ENCODE measurements at regions of chr7 and their contacts with region 1.

Region 1: DNA sequence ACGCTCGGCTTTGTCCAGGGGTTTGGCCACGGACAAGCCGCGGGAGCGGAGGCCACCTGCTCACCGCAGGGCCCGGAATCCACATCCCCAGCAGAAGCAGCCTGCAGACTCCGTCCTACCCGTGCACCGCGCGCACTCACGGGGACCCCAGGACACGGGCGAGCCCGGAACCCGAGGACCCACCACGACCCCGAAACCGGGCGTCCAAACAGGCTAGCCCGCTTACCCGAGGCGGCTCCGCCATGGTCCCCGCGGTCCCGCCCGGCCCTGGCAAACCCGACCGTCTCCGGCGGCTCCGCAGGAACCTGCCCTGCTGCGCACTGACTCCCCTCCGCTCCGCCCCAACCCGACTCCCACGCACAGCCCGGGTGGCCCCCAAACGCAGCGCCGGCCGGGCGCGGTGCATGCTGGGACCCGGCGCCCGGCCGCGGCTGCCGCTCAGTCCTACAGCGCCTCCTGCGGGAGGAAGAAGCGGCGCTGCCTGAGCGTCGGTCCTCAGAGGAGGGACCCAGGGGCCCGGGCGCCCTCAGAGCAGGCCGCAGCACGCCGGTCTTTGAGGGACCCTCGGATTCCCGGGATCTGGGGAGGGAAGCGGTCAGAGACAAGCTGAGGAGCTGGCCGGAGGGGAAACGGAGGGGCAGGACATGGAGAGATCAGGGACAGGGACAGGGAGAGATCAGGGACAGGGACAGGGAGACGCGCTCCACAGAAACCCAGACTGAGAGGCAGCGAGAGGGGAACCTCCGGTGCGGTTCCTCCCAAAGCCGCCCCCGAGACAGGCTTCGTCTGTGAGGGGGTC is at the start of gene ZNF786:
- DNase-seq: peak; percentile 58 to 91 (median 78)
- H3K4me3 ChIP-seq: peak within 1 kb of the TSS; percentile 43 to 100 (median 95)
- H3K27ac ChIP-seq: peak within 1 kb of the TSS; percentile 79 to 100 (median 97)
- H3K27me3 ChIP-seq: no peaks in the 10 kb centered on the region
- CTCF ChIP-seq: peak; percentile 71 to 99 (median 92)
- total RNA-seq, gene ZNF786: 7.0 to 22.7 (median 15.0) TPM

Region 2: DNA sequence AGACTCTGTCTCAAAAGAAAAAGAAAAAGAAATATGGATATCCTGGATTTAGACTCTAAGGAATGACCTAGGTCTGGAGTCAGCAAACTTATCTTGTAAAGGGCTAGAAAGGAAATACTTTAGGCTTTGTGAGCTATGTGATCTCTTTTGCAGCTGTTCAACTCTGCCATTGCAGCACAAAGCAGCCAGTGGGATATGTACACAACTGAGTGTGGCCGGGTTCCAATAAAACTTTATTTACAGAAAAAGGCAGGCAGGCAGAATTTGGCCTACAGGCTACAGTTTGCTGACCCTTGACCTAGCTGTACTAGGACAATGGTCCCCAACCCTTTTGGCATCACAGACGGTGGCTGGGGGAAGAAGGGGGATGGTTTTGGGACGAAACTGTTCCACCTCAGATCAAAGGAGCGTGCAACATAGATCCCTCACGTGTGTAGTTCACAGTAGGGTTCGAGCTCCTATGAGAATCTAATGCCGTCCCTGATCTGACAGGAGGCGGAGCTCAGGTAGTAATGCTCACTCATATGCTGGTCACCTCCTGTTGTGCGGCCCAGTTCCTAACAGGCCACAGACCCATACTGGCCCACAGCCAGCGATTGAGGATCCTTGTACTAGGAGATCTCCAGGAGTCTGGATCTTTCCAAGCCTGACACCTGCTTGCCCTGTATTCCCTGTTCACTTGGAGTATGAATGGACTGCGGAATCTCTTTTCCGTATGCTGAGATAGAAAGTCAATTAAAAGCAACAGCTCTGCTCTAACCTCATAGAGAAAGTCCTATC is 328.9 kb before region 1 on chr7:
- intact Hi-C with region 1: no loop called
- DNase-seq: peak in 1 of 10 donors; percentile 61
- H3K4me3 ChIP-seq: no peak overlapping the region
- H3K27ac ChIP-seq: no peak overlapping the region
- H3K27me3 ChIP-seq: no peaks in the 10 kb centered on the region
- CTCF ChIP-seq: no peak

Region 3: DNA sequence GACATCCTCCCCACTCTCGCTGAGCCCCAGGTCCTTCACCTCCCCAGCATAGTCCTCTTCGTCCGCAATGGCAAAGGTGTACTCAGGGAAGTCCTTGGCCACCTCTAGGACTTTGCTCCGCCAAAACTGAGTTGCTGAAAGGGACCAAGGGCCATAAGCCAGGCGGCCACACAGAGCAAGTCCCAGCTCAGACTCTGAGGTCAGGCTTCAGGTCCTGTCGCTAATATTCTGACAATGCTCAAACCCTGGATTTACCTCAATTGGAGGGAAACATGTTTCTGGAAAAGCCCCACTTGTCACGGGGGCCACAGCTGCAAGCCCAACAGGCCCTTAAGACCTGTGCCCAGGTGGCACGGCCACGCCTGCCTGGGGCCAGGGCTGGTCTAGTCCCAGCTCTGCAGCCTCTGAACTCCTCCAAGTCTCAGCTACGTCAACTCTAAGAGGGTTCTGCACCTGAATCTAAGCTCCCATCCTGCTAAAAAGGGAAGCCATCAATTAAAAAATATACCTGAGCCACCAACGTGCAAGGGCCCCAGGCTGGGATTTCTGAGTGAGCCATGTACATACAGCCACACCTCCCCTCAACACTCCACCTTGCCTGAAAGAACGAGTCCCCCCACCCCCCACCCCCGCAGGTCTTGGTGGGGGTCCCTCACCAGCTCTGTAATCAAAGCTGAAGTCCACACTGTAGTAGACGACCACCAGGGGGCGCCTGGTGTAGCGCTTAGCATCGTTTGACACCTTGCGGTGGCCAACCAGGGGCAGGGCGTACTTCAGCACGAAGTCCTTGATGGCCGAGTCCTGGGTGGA is 85.2 kb before region 1 on chr7:
- intact Hi-C with region 1: loop called (anchors 2 to 5 kb)
- DNase-seq: peak; percentile 55 to 82 (median 76)
- H3K4me3 ChIP-seq: peak overlapping the region in 2 of 59 donors; percentile 4 to 32
- H3K27ac ChIP-seq: peak overlapping the region in 4 of 59 donors; percentile 6 to 60 (median 25)
- H3K27me3 ChIP-seq: no peaks in the 10 kb centered on the region
- CTCF ChIP-seq: peak; percentile 45 to 93 (median 82)

Region 4: DNA sequence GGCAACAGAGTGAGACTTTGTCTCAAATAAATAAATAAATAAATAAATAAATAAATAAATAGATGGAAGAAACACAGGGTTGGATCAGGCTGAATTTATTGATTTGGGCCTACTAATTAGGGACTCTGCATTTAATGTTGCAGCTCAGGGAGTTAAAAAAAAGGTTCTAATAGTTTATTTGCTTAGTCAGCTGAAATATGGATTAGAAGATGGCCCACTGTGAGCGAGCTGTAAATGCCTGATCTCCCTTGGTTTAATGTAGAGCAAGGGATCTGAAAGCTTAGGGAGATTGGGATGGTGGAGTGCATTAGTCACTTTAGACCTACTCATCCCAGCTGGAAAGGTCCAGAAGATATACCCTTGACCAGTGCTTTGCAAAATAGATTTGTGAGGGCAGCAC is 37.2 kb before region 1 on chr7:
- intact Hi-C with region 1: no loop called
- DNase-seq: no peak
- H3K4me3 ChIP-seq: no peak overlapping the region
- H3K27ac ChIP-seq: no peak overlapping the region
- H3K27me3 ChIP-seq: no peaks in the 10 kb centered on the region
- CTCF ChIP-seq: no peak

Region 5: DNA sequence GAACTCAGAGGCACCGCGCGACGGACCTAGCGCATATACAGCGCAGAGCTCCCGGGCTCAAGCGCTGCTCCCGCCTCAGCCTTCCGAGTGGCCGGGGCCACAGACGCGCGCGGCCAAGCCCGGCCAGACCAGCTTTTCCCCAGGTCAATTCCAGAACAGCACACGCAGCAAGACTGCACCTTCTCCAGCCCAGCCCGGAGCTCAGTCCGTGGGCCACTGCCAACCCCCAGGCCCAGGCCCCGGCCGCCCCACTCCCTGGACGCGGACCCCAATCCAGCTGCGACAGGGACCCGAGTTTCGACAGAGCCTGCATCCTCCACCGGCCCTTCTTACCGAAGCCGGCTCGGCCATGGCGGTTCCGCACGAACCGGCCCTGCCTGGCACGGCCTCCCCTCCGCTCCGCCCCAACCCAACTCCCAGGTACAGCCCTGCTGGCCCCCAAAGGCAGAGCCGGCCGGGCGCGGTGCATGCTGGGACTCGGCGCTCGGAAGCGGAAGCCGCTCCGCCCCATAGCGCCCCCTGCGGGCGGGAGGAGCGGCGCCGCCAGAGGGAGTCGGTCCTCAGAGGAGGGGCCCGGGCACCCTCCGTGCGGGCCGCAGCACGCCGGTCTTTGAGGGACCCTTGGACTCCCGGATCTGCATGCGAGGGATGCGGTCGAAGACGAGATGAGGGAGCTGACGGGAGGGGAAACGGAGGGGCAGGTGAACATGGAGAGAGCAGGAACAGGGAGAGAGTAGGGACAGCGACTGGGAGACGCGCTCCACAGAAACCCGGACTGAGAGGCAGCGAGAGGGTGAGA is 35.5 kb after region 1 on chr7 and contains the start of gene ZNF425:
- intact Hi-C with region 1: loop called (anchors 1 to 2 kb)
- DNase-seq: peak; percentile 64 to 94 (median 83)
- H3K4me3 ChIP-seq: peak within 1 kb of the TSS; percentile 69 to 100 (median 94)
- H3K27ac ChIP-seq: peak within 1 kb of the TSS; percentile 53 to 99 (median 96)
- H3K27me3 ChIP-seq: no peaks in the 10 kb centered on the region
- CTCF ChIP-seq: peak; percentile 73 to 99 (median 94)
- total RNA-seq, gene ZNF425: 3.9 to 11.4 (median 6.6) TPM

Region 6: DNA sequence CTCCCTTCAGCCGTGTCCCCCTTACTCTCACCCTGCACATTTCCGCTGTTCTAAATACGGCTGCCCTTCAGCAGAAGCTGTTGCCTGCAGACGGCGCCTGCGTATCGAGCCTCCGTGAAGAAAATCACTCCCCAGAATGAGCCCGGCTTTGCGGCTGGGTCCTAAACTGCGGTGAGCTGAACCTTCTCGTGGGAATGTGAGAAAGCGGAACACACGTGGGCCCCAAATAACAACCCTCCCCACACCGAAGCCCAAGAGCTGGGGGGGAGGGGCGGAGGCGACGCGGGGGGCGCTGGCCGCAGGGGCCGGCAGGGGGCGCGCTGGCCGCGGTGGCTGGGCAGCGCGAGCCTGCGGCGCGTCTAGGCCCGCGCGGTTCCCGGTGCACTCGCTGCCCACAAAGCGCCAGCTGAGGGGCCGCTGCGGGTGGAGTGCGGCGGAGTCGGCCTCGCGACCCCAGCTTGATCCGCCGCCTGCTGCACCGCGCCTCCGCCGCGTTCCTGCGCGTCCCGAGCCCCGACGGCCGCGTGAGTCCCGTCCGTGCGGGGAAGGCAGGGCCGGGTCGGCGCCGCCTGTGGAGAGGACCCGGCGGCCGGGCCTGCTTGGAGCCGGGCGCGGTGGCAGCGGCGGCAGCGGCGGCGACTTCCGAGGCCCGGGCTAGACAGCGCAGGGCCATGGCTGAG is 56.6 kb after region 1 on chr7 and contains the start of gene ZNF398:
- intact Hi-C with region 1: no loop called
- DNase-seq: peak; percentile 51 to 82 (median 71)
- H3K4me3 ChIP-seq: peak within 1 kb of the TSS; percentile 64 to 97 (median 85)
- H3K27ac ChIP-seq: peak within 1 kb of the TSS; percentile 62 to 95 (median 89)
- H3K27me3 ChIP-seq: no peaks in the 10 kb centered on the region
- CTCF ChIP-seq: peak; percentile 24 to 98 (median 70)
- total RNA-seq, gene ZNF398: 16.7 to 30.3 (median 24.1) TPM

Region 7: DNA sequence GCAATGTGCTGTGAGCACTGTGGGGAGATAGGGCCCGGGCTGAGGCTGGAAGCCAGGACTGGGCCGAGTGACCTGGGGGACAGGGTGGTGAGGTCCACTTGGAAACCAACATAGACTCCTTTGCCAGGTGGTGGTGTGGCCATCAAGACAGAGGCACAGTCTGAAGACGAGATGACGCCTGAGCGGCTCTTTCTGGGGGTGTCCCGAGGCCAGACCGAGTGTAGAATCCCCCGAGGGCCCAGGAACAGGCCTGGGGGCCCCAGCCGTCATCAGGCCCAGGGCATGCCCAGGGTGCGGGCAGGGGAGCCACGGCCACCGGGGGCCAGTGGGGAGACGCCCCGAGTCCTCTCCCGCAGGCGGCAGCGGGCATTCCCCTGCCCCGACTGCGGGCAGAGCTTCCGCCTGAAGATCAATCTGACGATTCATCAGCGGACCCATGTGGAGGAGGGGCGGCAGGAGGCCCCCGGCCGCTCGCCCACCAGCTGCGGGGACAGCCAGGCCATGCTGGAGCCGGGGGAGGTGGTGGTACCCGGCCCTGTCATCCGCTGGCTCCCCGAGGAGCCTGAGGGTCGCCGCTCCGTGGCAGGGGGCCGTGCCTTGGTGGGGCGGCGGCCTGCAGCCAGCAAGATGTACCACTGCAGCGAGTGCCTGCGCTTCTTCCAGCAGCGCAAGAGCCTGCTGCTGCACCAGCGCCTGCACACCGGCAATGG is 190.9 kb after region 1 on chr7:
- intact Hi-C with region 1: no loop called
- DNase-seq: no peak
- H3K4me3 ChIP-seq: no peak overlapping the region
- H3K27ac ChIP-seq: no peak overlapping the region
- H3K27me3 ChIP-seq: no peaks in the 10 kb centered on the region
- CTCF ChIP-seq: no peak

Measured in dorsolateral prefrontal cortex (tissue), 120 donors.